Activated CD4-positive, alpha-beta memory T cell treated with anti-CD3 and anti-CD28 coated beads, Interleukin-2, amount 10 ng/mL, durations not matched to agents 7 days and 5 days (primary cell): ENCODE measurements at regions of chr10 and their contacts with region 1.

Region 1: DNA sequence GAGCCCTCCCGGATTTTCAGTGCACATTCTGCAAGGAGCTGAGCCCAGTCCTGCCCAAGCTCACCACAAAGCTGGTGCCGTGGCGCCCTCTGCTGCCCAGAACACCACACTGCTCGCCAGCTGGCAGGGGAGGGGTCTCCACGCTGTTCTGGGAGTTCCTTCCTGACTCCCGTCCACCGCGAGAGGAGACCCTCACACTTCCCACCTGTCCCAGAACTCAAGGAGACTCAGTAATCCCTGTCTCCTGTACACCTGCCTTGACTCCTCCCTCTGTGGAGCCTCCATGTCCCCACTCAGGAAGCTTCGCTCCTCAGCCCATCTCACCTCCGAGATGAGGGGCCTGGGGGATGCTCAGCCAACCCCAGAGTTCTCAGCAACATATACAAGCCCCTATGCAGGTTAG is 11.3 kb downstream of the C10orf105 start:
- DNase-seq: peak; percentile 73
- H3K4me3 Mint-ChIP-seq: no peak overlapping the region
- H3K27ac Mint-ChIP-seq: no peak overlapping the region
- H3K4me1 Mint-ChIP-seq: peaks cover 32% of the 10 kb centered on the region
- H3K27me3 Mint-ChIP-seq: no peaks in the 10 kb centered on the region

Region 2: DNA sequence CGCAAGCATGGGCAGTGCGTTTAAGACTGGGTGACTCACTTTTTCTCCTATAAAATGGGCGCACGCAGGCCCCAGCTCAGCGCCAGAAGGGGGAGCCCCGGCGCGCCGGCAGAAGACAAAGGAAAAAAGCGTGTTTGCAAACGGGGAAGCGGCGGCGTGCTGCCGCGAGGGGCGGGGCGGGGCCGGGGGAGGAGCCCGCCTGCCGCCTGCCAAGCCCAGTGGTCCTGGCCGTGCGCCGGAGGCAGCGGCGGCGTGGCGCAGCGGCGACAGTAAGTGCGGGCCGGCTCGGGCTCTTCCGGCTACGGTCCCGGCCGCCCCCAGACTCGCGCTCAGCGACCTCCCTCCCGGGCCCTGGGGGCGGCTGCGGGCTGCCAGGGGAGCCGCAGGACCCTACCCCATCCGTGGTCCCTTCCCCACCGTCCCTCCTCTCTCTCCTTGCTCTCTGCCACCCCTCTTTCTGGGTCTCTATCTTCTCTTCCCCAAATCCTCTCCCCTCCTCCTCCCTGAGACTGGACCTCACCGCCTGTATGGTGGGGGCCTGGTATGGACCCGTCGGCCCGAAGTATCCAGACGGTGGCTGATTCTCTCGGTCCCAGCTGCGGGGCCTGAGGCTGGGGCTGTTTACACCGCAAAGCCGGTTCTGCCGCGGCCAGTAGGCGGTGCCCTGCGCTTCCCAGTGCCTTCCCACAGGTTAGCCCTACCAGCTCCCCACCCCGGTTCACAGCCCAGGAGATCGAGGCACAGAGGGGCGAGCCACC is 389.1 kb before region 1 on chr10 and contains the start of gene SLC29A3:
- CTCF ChIA-PET with region 1: interaction called, 10 read pairs
- POLR2A ChIA-PET with region 1: no interaction called
- DNase-seq: peak; percentile 91
- H3K4me3 Mint-ChIP-seq: peak within 1 kb of the TSS; percentile 87
- H3K27ac Mint-ChIP-seq: peak within 1 kb of the TSS; percentile 55
- H3K4me1 Mint-ChIP-seq: peaks cover 23% of the 10 kb centered on the region
- H3K27me3 Mint-ChIP-seq: no peaks in the 10 kb centered on the region
- total RNA-seq, gene SLC29A3: 2.6 to 3.2 TPM

Region 3: GRCh38 chr10:71608819-71609768 is 99.2 kb before region 1 on chr10:
- CTCF ChIA-PET with region 1: interaction called, 10 read pairs
- POLR2A ChIA-PET with region 1: no interaction called
- DNase-seq: peak; percentile 68
- H3K4me3 Mint-ChIP-seq: no peak overlapping the region
- H3K27ac Mint-ChIP-seq: no peak overlapping the region
- H3K4me1 Mint-ChIP-seq: no peaks in the 10 kb centered on the region
- H3K27me3 Mint-ChIP-seq: peaks cover 5% of the 10 kb centered on the region

Region 4: GRCh38 chr10:71719042-71719441 is 10.7 kb after region 1 on chr10:
- CTCF ChIA-PET with region 1: interaction called, 10 read pairs
- POLR2A ChIA-PET with region 1: interaction called, 4 read pairs
- DNase-seq: no peak
- H3K4me3 Mint-ChIP-seq: no peak overlapping the region
- H3K27ac Mint-ChIP-seq: no peak overlapping the region
- H3K4me1 Mint-ChIP-seq: peaks cover 33% of the 10 kb centered on the region
- H3K27me3 Mint-ChIP-seq: no peaks in the 10 kb centered on the region

Region 5: GRCh38 chr10:71756311-71757191 is 48.2 kb after region 1 on chr10:
- CTCF ChIA-PET with region 1: interaction called, 13 read pairs
- POLR2A ChIA-PET with region 1: interaction called, 4 read pairs
- DNase-seq: no peak
- H3K4me3 Mint-ChIP-seq: peak overlapping the region; percentile 21
- H3K27ac Mint-ChIP-seq: peak overlapping the region; percentile 87
- H3K4me1 Mint-ChIP-seq: peaks cover 78% of the 10 kb centered on the region
- H3K27me3 Mint-ChIP-seq: no peaks in the 10 kb centered on the region